Mammary epithelial cell (primary cell): ENCODE measurements at regions of chr3 and their contacts with region 1.

Region 1: DNA sequence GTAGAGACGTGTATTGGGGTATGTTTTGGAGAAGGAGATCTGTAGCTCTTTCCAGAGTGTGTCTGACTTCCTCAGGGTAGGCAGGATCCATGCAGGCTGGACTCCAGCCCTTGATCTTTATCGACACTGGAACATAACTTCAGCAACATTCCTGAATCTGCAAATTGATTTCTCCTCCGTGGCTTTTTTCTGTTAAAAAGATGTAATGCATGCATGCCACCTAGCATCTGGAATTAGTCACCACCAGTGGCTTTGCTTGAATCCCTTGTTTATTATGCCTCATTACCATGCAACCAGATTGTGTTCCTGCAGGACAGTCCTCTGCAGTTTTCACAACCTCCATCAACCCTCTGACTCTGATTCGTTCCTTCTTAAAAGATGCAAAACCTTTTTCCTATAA is 86.1 kb downstream of the CCNL1 start:
- DNase-seq: peak; percentile 56
- H3K4me3 ChIP-seq: no peak overlapping the region
- H3K27ac ChIP-seq: no peak overlapping the region
- H3K4me1 ChIP-seq: no peaks in the 10 kb centered on the region
- H3K27me3 ChIP-seq: no peaks in the 10 kb centered on the region
- CTCF ChIP-seq: peak in 1 of 2 donors; percentile 3

Region 2: GRCh38 chr3:156892701-156893100 is 181.1 kb before region 1 on chr3:
- CTCF ChIA-PET with region 1: no interaction called
- dilution Hi-C with region 1: no loop called
- in situ Hi-C with region 1: no loop called
- intact Hi-C with region 1: loop called (anchors 2 kb)
- DNase-seq: peak; percentile 93
- H3K4me3 ChIP-seq: no peak overlapping the region
- H3K27ac ChIP-seq: no peak overlapping the region
- H3K4me1 ChIP-seq: peaks cover 11% of the 10 kb centered on the region
- H3K27me3 ChIP-seq: no peaks in the 10 kb centered on the region
- CTCF ChIP-seq: no peak

Region 3: DNA sequence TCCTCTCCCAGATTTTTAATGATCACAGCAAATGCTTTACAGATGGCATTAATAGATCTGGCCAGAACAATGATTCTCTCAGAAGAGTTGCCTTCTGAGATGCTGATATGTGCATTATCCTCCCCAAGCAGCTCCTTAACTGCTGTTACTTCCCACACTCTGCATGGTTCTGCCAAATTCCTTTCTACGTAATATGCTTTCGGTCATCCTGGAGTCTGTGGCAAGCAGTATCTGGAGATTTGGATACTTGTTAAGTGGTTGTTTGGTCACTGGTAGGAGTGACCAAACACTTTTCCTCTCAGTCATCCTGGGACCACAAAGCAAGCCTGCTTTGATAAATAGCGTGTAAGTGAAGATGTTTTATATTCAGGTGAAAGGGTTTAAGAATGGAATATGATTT is 157.3 kb after region 1 on chr3:
- CTCF ChIA-PET with region 1: no interaction called
- dilution Hi-C with region 1: no loop called
- in situ Hi-C with region 1: no loop called
- intact Hi-C with region 1: loop called (anchors 5 kb)
- DNase-seq: no peak
- H3K4me3 ChIP-seq: no peak overlapping the region
- H3K27ac ChIP-seq: no peak overlapping the region
- H3K4me1 ChIP-seq: no peaks in the 10 kb centered on the region
- H3K27me3 ChIP-seq: no peaks in the 10 kb centered on the region
- CTCF ChIP-seq: no peak